OCI-LY7 (cell line): ENCODE measurements at regions of chr1 and their contacts with region 1.

Region 1: GRCh38 chr1:9867408-9868243 is 42.4 kb downstream of the CTNNBIP1 start:
- DNase-seq: peak; percentile 87
- H3K4me3 ChIP-seq: no peak overlapping the region
- H3K27ac ChIP-seq: no peak overlapping the region
- H3K4me1 ChIP-seq: peaks cover 59% of the 10 kb centered on the region
- CTCF ChIP-seq: peak; percentile 97

Region 2: GRCh38 chr1:9724706-9725476 is 142.7 kb before region 1 on chr1:
- CTCF ChIA-PET with region 1: interaction called, 3 read pairs
- POLR2A ChIA-PET with region 1: no interaction called
- intact Hi-C with region 1: loop called (anchors 1 kb)
- DNase-seq: peak; percentile 78
- H3K4me3 ChIP-seq: no peak overlapping the region
- H3K27ac ChIP-seq: no peak overlapping the region
- H3K4me1 ChIP-seq: peaks cover 9% of the 10 kb centered on the region
- CTCF ChIP-seq: peak; percentile 84